CD8-positive, alpha-beta memory T cell (primary cell): ENCODE measurements at regions of chr11 and their contacts with region 1.

Region 1: GRCh38 chr11:95231127-95231880 is at the start of gene SESN3:
- DNase-seq: peak; percentile 98 to 99 (median 99)
- H3K4me3 ChIP-seq: peak within 1 kb of the TSS; percentile 68
- H3K4me3 Mint-ChIP-seq: peak within 1 kb of the TSS in 6 of 7 donors; percentile 90 to 97 (median 94)
- H3K27ac ChIP-seq: peak within 1 kb of the TSS; percentile 60
- H3K27ac Mint-ChIP-seq: peak within 1 kb of the TSS; percentile 83 to 98 (median 89)
- H3K4me1 ChIP-seq: peaks cover 24% of the 10 kb centered on the region
- H3K4me1 Mint-ChIP-seq: peaks cover 41 to 50% (median 49%) of the 10 kb centered on the region in 3 donors
- H3K27me3 ChIP-seq: no peaks in the 10 kb centered on the region
- H3K27me3 Mint-ChIP-seq: no peaks in the 10 kb centered on the region
- total RNA-seq, gene SESN3: 18.8 to 19.7 TPM

Region 2: GRCh38 chr11:95050595-95051202 is 180.6 kb before region 1 on chr11:
- CTCF ChIA-PET with region 1: no interaction called
- POLR2A ChIA-PET with region 1: no interaction called
- DNase-seq: no peak
- H3K4me3 ChIP-seq: no peak overlapping the region
- H3K4me3 Mint-ChIP-seq: no peak overlapping the region
- H3K27ac ChIP-seq: no peak overlapping the region
- H3K27ac Mint-ChIP-seq: no peak overlapping the region
- H3K4me1 ChIP-seq: no peaks in the 10 kb centered on the region
- H3K4me1 Mint-ChIP-seq: no peaks in the 10 kb centered on the region
- H3K27me3 ChIP-seq: peaks cover 11% of the 10 kb centered on the region
- H3K27me3 Mint-ChIP-seq: peaks cover 33 to 62% of the 10 kb centered on the region in 2 donors

Region 3: DNA sequence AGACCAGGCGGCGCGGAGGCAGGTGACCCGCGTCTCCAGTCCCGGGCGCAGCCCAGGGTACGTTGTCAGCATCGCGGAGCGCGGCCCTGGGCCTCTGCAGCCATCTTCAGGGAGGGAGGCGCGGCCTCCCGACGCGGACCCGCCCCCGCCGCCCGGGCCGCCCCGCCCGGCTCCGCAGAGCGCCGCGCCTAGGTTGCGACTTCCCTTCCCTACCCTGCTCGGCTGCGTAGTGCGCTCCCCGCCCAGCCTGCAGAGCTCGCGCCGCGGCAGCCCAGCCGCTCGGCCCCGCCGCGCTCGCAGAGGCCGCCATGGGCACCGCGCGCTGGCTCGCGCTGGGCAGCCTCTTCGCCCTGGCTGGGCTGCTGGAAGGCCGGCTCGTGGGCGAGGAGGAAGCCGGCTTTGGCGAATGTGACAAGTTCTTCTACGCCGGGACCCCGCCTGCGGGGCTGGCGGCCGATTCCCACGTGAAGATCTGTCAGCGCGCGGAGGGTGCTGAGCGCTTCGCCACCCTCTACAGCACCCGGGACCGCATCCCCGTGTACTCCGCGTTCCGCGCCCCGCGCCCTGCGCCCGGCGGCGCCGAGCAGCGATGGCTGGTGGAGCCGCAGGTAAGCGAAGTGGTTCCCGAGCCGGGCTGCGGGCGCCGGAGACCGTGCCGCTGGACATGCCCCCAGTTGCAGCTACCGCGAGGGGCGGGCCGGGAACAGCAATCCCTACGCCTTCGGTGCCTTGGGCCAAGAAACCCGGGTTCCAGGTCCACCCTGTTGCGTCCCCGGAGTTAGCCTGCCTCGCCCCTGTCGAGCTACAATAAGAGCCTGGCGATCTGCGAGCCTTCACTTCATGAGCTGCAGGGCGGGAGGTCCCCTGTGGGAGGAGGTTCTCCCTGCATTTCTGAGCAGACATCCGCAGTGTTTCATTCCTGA is 141.4 kb before region 1 on chr11 and contains the start of gene ENDOD1:
- CTCF ChIA-PET with region 1: interaction called, 3 read pairs
- POLR2A ChIA-PET with region 1: interaction called, 17 read pairs
- DNase-seq: peak; percentile 75 to 89 (median 84)
- H3K4me3 ChIP-seq: peak within 1 kb of the TSS; percentile 70
- H3K4me3 Mint-ChIP-seq: peak within 1 kb of the TSS; percentile 91 to 98 (median 93)
- H3K27ac ChIP-seq: peak within 1 kb of the TSS; percentile 78
- H3K27ac Mint-ChIP-seq: peak within 1 kb of the TSS; percentile 92 to 99 (median 98)
- H3K4me1 ChIP-seq: peaks cover 33% of the 10 kb centered on the region
- H3K4me1 Mint-ChIP-seq: peaks cover 46 to 58% (median 48%) of the 10 kb centered on the region in 3 donors
- H3K27me3 ChIP-seq: no peaks in the 10 kb centered on the region
- H3K27me3 Mint-ChIP-seq: no peaks in the 10 kb centered on the region
- total RNA-seq, gene ENDOD1: 29.6 to 30.1 TPM

Region 4: GRCh38 chr11:95163106-95163505 is 68.2 kb before region 1 on chr11:
- CTCF ChIA-PET with region 1: no interaction called
- POLR2A ChIA-PET with region 1: no interaction called
- DNase-seq: no peak
- H3K4me3 ChIP-seq: no peak overlapping the region
- H3K4me3 Mint-ChIP-seq: no peak overlapping the region
- H3K27ac ChIP-seq: no peak overlapping the region
- H3K27ac Mint-ChIP-seq: peak overlapping the region in 2 of 8 donors; percentile 5 to 42
- H3K4me1 ChIP-seq: peaks cover 3% of the 10 kb centered on the region
- H3K4me1 Mint-ChIP-seq: peaks cover 4 to 18% (median 18%) of the 10 kb centered on the region in 3 donors
- H3K27me3 ChIP-seq: no peaks in the 10 kb centered on the region
- H3K27me3 Mint-ChIP-seq: no peaks in the 10 kb centered on the region

Region 5: DNA sequence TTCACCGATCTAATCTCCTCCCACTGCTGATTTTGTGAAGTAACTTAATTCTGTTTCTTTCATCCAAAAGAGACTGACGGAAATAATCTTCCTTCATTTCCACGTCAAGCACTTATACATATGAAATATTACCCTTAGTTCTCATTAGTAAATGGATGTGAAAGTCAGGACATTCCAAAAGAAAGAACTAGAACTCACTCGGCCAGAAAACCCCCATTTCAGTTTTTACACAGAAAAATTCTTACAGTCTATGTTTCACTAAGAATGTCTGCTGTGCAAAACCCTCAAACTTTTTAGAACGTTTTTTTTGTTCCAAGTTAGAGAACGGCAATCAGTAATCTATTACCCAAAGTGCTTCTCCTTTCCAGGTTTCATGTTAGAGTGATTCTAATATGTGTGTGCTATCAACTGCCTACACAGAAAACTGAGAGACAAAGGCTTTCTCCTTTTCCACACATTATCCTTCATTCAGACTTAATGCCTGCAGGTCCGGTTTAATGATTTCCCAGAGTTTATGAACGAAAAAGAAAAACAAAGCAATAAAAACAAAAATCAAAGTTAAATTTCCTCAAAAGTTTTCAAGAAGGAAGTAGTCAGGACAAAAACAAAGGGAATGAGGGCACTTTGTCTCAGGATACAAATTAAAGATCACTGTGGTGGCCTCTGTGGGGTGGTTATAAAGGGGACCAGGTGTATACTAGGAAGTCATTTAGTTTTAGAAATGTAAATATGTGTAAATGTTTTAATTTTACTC is 11.0 kb after region 1 on chr11:
- CTCF ChIA-PET with region 1: interaction called, 14 read pairs
- POLR2A ChIA-PET with region 1: interaction called, 3 read pairs
- DNase-seq: no peak
- H3K4me3 ChIP-seq: no peak overlapping the region
- H3K4me3 Mint-ChIP-seq: no peak overlapping the region
- H3K27ac ChIP-seq: no peak overlapping the region
- H3K27ac Mint-ChIP-seq: no peak overlapping the region
- H3K4me1 ChIP-seq: no peaks in the 10 kb centered on the region
- H3K4me1 Mint-ChIP-seq: no peaks in the 10 kb centered on the region
- H3K27me3 ChIP-seq: no peaks in the 10 kb centered on the region
- H3K27me3 Mint-ChIP-seq: peaks cover 0 to 23% of the 10 kb centered on the region in 2 donors

Region 6: GRCh38 chr11:95254131-95254704 is 22.9 kb after region 1 on chr11:
- CTCF ChIA-PET with region 1: interaction called, 16 read pairs
- POLR2A ChIA-PET with region 1: interaction called, 8 read pairs
- DNase-seq: peak; percentile 50 to 85 (median 72)
- H3K4me3 ChIP-seq: peak overlapping the region; percentile 52
- H3K4me3 Mint-ChIP-seq: peak overlapping the region; percentile 81 to 94 (median 88)
- H3K27ac ChIP-seq: peak overlapping the region; percentile 10
- H3K27ac Mint-ChIP-seq: peak overlapping the region; percentile 35 to 96 (median 88)
- H3K4me1 ChIP-seq: peaks cover 37% of the 10 kb centered on the region
- H3K4me1 Mint-ChIP-seq: peaks cover 21 to 41% (median 31%) of the 10 kb centered on the region in 3 donors
- H3K27me3 ChIP-seq: no peaks in the 10 kb centered on the region
- H3K27me3 Mint-ChIP-seq: no peaks in the 10 kb centered on the region

Region 7: GRCh38 chr11:95790123-95790932 is 559.0 kb after region 1 on chr11 and contains the start of gene CEP57:
- CTCF ChIA-PET with region 1: no interaction called
- POLR2A ChIA-PET with region 1: interaction called, 25 read pairs
- DNase-seq: peak; percentile 85 to 96 (median 96)
- H3K4me3 ChIP-seq: peak within 1 kb of the TSS; percentile 97
- H3K4me3 Mint-ChIP-seq: peak within 1 kb of the TSS; percentile 98 to 100 (median 99)
- H3K27ac ChIP-seq: peak within 1 kb of the TSS; percentile 100
- H3K27ac Mint-ChIP-seq: peak within 1 kb of the TSS; percentile 100
- H3K4me1 ChIP-seq: peaks cover 33% of the 10 kb centered on the region
- H3K4me1 Mint-ChIP-seq: peaks cover 52 to 76% (median 72%) of the 10 kb centered on the region in 3 donors
- H3K27me3 ChIP-seq: no peaks in the 10 kb centered on the region
- H3K27me3 Mint-ChIP-seq: peaks cover 0 to 7% of the 10 kb centered on the region in 2 donors
- total RNA-seq, gene CEP57: 63.7 to 64.4 TPM